Activated CD4-positive, alpha-beta memory T cell treated with anti-CD3 and anti-CD28 coated beads for 36 hours (primary cell): ENCODE measurements at regions of chr1 and their contacts with region 1.

Region 1: DNA sequence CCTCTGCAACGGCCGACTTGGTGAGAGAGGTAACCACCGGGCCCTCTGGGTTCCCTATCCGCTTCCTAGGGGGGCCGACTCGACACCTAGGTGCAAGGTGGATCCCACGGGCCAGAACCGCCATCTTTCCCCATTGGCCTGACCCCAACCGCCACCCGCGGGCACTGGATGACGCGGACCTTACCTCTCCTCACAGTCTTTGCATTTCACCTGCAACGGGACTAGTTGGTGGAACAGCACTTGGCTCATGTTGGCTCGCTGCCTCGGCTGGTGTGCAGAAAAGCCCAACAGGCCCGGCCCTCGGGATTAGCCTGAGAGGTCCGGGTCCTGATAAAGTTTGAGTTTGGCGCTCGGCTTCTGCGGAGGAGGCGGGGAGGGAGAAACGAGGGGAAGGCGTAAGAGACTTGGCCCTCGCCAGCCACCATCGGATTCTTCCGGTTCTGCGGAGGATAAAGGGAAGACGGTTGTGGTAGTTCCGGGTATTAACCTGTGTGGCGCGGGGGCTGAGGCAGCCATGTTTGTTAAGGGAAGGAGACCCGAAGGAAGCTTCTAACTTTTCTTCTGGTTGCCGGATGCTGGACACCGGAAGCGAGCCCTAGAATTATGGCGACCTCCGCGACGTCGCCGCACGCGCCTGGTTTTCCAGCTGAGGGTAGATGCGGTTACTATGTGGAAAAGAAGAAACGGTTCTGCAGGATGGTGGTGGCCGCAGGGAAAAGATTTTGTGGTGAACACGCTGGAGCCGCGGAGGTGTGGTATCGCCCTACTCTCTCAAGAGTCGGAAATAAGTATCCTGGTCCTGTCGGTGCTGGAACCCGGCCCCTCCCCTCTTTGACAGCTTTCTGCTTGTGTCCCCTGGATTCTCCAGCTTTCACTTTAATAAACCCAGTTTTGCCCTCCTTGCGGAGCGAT is at the starts of genes SASS6 and TRMT13:
- DNase-seq: peak; percentile 97
- H3K4me3 Mint-ChIP-seq: peak within 1 kb of the TSS; percentile 96
- H3K27ac Mint-ChIP-seq: peak within 1 kb of the TSS; percentile 93
- H3K4me1 Mint-ChIP-seq: peaks cover 39% of the 10 kb centered on the region
- H3K27me3 Mint-ChIP-seq: no peaks in the 10 kb centered on the region
- total RNA-seq, gene SASS6: 11.5 to 12.0 TPM
- total RNA-seq, gene TRMT13: 17.5 TPM

Region 2: GRCh38 chr1:99808391-99809115 is 324.3 kb before region 1 on chr1:
- CTCF ChIA-PET with region 1: no interaction called
- POLR2A ChIA-PET with region 1: no interaction called
- intact Hi-C with region 1: loop called (anchors 1 kb)
- DNase-seq: peak; percentile 22
- H3K4me3 Mint-ChIP-seq: peak overlapping the region; percentile 43
- H3K27ac Mint-ChIP-seq: no peak overlapping the region
- H3K4me1 Mint-ChIP-seq: peaks cover 14% of the 10 kb centered on the region
- H3K27me3 Mint-ChIP-seq: peaks cover 14% of the 10 kb centered on the region

Region 3: DNA sequence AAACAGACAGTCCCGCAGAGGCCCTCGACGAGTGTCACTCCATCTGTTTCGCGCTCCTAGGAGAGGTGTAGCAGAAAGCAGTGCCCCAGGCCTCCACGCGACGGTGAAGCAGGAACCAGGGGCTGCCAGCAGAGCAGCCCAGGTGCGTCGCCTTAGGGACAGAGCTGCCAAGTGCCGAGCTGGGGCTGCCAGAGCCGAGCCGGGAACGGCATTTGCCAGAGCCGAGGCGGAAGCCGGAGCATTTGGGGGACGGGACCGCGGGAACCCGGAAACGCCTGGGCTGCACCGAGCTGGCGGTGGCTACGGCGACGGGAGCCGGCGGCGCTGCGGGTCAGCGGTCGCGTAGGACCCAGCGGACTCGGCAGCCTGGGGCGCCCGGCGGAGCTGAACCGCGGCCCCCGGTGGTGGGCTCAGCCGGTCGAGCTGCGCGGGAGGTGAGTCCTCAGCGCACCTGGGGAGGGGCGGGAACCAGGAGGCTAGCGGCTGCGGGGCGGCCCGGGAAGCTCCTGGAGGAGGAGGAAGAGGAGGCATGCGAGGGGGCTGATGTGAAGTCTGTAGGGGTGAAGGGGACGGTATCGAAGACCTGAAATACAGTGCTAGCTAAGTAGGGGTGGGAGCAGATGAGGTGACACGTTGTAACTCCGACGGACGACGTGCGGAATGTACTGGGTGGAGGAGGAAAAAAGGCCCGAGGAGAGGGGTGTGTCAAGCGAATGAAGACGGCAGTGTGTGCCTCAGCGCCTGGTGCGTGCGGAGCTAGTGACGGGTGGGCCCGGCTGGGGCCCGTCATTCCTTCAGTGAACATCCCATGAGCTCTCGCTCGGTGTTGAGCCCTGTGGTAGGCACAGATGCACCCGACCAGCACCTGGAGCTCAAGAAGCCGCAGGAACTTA is 162.8 kb before region 1 on chr1 and contains the start of gene SLC35A3:
- CTCF ChIA-PET with region 1: no interaction called
- POLR2A ChIA-PET with region 1: interaction called, 3 read pairs
- intact Hi-C with region 1: loop called (anchors 1 kb)
- DNase-seq: peak; percentile 88
- H3K4me3 Mint-ChIP-seq: peak within 1 kb of the TSS; percentile 100
- H3K27ac Mint-ChIP-seq: peak within 1 kb of the TSS; percentile 88
- H3K4me1 Mint-ChIP-seq: peaks cover 18% of the 10 kb centered on the region
- H3K27me3 Mint-ChIP-seq: no peaks in the 10 kb centered on the region
- total RNA-seq, gene SLC35A3: 16.5 to 18.3 TPM

Region 4: DNA sequence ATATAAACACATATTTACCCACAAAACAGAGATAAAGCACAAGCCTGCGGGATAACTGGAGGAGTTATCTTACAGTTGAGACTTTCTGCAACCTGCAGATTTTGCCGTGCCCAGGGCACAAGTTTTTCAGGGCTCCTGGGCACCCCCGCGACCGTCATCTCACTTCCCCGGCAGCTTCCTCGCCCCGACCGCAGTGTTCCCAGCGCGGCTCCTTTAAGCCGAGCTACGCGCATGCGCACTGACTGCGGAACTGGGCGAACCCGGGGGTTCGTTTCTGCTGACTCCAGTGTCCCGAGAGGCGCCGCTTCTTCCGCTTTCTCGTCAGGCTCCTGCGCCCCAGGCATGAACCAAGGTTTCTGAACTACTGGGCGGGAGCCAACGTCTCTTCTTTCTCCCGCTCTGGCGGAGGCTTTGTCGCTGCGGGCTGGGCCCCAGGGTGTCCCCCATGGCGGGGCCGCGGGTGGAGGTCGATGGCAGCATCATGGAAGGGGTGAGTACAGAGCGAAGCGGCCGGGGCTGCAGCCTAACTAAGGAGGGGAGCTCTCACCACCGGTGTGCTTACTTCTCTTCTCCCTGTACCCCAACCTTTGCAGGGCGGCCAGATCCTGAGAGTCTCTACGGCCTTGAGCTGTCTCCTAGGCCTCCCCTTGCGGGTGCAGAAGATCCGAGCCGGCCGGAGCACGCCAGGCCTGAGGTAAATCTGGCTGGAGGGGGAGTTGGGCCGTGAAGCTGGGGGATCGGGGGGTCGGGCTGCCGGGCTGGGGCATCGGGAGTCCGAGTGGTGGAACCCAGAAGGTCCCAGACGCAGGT is 133.3 kb after region 1 on chr1 and contains the start of gene RTCA:
- CTCF ChIA-PET with region 1: no interaction called
- POLR2A ChIA-PET with region 1: no interaction called
- intact Hi-C with region 1: loop called (anchors 2 kb)
- DNase-seq: peak; percentile 96
- H3K4me3 Mint-ChIP-seq: peak within 1 kb of the TSS; percentile 100
- H3K27ac Mint-ChIP-seq: peak within 1 kb of the TSS; percentile 97
- H3K4me1 Mint-ChIP-seq: peaks cover 40% of the 10 kb centered on the region
- H3K27me3 Mint-ChIP-seq: no peaks in the 10 kb centered on the region
- total RNA-seq, gene RTCA: 56.6 to 58.2 TPM

Region 5: GRCh38 chr1:100543640-100544039 is 410.8 kb after region 1 on chr1:
- CTCF ChIA-PET with region 1: no interaction called
- POLR2A ChIA-PET with region 1: no interaction called
- intact Hi-C with region 1: loop called (anchors 5 kb)
- DNase-seq: peak; percentile 63
- H3K4me3 Mint-ChIP-seq: no peak overlapping the region
- H3K27ac Mint-ChIP-seq: no peak overlapping the region
- H3K4me1 Mint-ChIP-seq: peaks cover 8% of the 10 kb centered on the region
- H3K27me3 Mint-ChIP-seq: peaks cover 20% of the 10 kb centered on the region